Naive thymus-derived CD8-positive, alpha-beta T cell (primary cell): ENCODE measurements at regions of chr17 and their contacts with region 1.

Region 1: DNA sequence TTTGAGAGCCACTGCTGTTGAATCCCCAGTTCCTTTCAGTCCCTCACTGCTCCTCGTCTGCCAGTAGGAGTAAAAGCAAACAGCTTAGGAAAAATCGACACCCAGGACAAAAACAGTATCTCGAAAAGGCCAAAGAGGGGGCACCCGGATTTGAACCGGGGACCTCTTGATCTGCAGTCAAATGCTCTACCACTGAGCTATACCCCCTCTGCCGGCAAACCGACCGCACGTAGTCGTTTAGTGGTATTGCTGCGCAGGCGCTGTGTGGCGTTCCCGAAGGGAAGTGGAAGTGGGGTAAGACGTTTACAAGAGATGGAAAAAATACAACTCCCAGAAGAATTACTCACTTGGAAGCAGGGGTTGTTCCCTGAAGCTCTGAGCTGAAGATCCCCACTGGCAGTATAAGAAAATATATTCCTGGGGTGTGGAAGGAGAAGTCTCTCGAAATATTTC is 2.2 kb upstream of the PLXDC1 start:
- DNase-seq: peak; percentile 84 to 98 (median 92)
- ATAC-seq: peak; percentile 53 to 59
- H3K4me3 Mint-ChIP-seq: peak overlapping the region; percentile 97 to 100 (median 99)
- H3K27ac Mint-ChIP-seq: peak overlapping the region; percentile 91 to 100 (median 96)
- H3K4me1 Mint-ChIP-seq: peaks cover 40 to 52% (median 47%) of the 10 kb centered on the region in 4 donors
- H3K27me3 Mint-ChIP-seq: peaks cover 0 to 15% (median 0%) of the 10 kb centered on the region in 5 donors

Region 2: GRCh38 chr17:38853292-38854219 is 300.1 kb before region 1 on chr17 and contains the start of gene RPL23:
- POLR2A ChIA-PET with region 1: interaction called, 12 read pairs
- DNase-seq: peak; percentile 74 to 95 (median 89)
- ATAC-seq: peak; percentile 80 to 82
- H3K4me3 Mint-ChIP-seq: peak within 1 kb of the TSS; percentile 94 to 99 (median 96)
- H3K27ac Mint-ChIP-seq: peak within 1 kb of the TSS; percentile 98 to 100 (median 99)
- H3K4me1 Mint-ChIP-seq: peaks cover 29 to 47% (median 44%) of the 10 kb centered on the region in 4 donors
- H3K27me3 Mint-ChIP-seq: no peaks in the 10 kb centered on the region
- polyA plus RNA-seq, gene RPL23: 1,506 to 1,897 (median 1,688) TPM

Region 3: DNA sequence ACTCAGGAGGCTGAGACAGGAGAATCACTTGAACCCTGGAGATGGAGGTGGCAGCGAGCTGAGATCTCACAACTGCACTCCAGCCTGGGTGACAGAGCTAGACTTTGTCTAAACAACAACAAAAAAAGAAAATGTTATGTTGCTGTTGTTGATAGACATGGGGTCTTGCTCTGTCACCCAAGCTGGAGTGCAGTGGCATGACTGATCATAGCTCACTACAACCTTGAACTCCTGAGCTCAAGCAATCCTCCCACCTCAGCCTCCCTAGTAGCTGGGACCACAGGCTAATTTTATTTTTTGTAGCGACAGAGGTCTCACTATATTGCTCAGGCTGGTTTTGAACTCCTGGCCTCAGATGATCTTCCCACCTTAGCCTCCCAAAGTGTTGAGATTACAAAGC is 206.4 kb before region 1 on chr17:
- POLR2A ChIA-PET with region 1: no interaction called
- DNase-seq: peak in 1 of 10 donors; percentile 12
- ATAC-seq: peak in 1 of 2 donors; percentile 30
- H3K4me3 Mint-ChIP-seq: no peak overlapping the region
- H3K27ac Mint-ChIP-seq: no peak overlapping the region
- H3K4me1 Mint-ChIP-seq: no peaks in the 10 kb centered on the region
- H3K27me3 Mint-ChIP-seq: no peaks in the 10 kb centered on the region

Region 4: DNA sequence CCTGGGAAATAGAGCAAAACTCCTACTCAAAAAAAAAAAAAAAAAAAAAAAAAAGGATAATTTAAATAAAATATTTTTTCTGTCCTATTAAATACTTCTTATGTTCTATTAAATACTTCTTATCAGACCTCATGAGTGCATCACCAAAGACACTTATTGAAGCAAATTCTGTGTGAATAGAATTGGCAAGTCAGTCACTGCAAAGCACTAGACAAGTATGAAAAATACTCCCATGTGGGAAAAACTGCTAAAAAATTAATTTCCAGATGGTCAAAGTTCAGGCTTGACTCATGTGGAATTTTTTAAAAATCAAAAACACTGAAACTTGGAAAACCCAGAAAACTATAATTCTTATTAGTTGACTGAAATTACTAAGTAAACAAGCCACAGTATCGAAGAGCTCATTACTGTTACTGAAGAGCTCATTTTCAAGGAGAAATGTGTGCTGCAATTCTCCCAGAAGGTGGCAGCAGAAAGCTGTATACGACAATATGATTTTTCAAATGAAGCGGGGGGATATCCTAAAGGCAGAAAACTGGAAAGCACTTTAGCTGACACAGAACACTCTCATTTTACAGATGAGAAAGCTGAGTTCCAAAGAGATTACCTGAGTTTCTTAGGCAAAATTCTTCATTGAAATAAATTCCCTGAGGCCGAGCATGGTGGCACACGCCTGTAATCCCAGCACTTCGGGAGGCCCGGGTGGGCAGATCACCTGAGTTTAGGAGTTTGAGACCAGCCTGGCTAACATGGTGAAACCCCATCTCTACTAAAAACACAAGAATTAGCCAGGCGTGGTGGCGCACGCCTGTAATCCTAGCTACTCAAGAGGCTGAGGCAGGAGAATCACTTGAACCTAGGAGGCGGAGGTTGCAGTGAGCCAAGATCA is 170.5 kb before region 1 on chr17:
- POLR2A ChIA-PET with region 1: interaction called, 47 read pairs
- DNase-seq: peak in 9 of 10 donors; percentile 33 to 74 (median 53)
- ATAC-seq: peak; percentile 73 to 77
- H3K4me3 Mint-ChIP-seq: no peak overlapping the region
- H3K27ac Mint-ChIP-seq: peak overlapping the region in 1 of 10 donors; percentile 24
- H3K4me1 Mint-ChIP-seq: peaks cover 0 to 2% (median 0%) of the 10 kb centered on the region in 4 donors
- H3K27me3 Mint-ChIP-seq: no peaks in the 10 kb centered on the region

Region 5: GRCh38 chr17:39069114-39069756 is 84.4 kb before region 1 on chr17:
- POLR2A ChIA-PET with region 1: interaction called, 40 read pairs
- DNase-seq: peak in 8 of 10 donors; percentile 2 to 67 (median 42)
- ATAC-seq: peak; percentile 92 to 93
- H3K4me3 Mint-ChIP-seq: peak overlapping the region in 1 of 10 donors; percentile 44
- H3K27ac Mint-ChIP-seq: peak overlapping the region in 7 of 10 donors; percentile 13 to 89 (median 75)
- H3K4me1 Mint-ChIP-seq: peaks cover 6 to 13% (median 7%) of the 10 kb centered on the region in 4 donors
- H3K27me3 Mint-ChIP-seq: no peaks in the 10 kb centered on the region

Region 6: DNA sequence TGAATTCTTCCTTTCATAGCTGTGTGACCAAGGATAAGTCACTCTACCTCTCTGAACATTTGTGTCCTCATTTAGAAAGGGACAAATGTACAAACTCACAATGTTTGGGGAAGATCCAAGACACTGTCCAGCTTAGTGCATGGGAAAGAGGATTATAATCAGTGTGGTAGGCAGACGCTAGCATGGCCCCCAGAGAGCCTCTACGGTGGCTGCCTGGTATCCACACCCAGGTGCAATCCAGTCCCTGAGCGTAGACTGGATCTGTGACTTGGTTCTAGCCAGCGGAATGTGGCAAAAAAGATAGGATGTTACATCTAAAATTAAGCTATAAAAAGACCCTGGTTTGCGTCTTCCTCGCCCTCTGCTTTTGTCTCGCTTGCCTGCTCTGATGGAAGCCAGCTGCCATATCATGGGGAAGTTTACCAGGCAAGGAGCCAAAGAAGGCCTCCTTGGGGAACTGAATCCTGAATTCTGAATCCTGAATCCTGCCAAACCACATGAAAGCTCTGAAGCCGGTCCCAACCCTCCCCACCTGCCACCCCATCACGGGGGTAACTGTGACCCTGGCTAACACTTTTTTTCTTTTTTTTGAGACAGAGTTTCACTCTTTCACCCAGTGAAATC is 53.9 kb before region 1 on chr17:
- POLR2A ChIA-PET with region 1: interaction called, 39 read pairs
- DNase-seq: no peak
- ATAC-seq: no peak
- H3K4me3 Mint-ChIP-seq: peak overlapping the region in 3 of 10 donors; percentile 24 to 51 (median 37)
- H3K27ac Mint-ChIP-seq: peak overlapping the region in 7 of 10 donors; percentile 24 to 89 (median 70)
- H3K4me1 Mint-ChIP-seq: peaks cover 46 to 76% (median 74%) of the 10 kb centered on the region in 4 donors
- H3K27me3 Mint-ChIP-seq: no peaks in the 10 kb centered on the region

Region 7: DNA sequence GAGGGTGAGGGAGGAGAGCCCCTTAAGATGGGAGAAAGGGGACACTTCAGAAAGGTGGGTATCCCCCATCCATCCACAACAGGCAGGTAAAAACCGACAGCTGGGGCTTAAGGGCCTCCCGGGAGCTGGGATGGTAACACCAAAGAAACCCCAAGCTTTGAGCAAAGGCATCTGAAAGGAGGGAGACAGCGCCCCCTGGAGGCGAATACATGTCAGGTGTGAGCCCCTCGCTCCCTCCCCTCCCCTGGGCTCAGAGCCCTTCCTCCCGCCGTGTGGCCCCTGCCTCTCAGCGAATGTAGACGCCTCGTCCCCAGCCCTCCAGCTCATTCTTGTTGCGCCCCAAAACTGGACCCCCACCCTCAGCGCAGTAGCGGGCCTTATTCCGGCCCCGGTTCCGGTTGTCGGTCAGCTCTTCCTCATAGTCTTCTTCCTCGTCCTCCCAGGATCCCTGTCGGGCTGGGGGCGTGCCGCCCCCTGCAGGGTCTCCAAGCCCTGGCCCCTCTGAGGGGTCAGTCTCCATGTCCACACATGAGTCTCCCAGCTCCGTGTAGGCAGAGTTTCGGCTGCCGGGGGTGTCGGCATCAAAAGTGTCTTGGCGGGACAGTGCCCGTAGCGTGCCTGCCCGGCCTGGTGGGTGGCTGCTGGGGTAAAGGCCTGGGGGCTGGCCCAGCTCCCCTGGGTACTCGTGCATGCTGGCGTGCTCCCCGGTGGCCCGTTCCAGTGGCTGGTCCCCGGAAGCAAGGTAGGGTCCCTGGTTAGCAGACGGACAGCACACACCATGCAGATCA is 21.5 kb after region 1 on chr17:
- POLR2A ChIA-PET with region 1: interaction called, 12 read pairs
- DNase-seq: peak; percentile 68 to 90 (median 78)
- ATAC-seq: peak; percentile 94 to 98
- H3K4me3 Mint-ChIP-seq: no peak overlapping the region
- H3K27ac Mint-ChIP-seq: peak overlapping the region in 2 of 10 donors; percentile 51 to 77
- H3K4me1 Mint-ChIP-seq: peaks cover 16 to 33% (median 25%) of the 10 kb centered on the region in 4 donors
- H3K27me3 Mint-ChIP-seq: no peaks in the 10 kb centered on the region

Region 8: DNA sequence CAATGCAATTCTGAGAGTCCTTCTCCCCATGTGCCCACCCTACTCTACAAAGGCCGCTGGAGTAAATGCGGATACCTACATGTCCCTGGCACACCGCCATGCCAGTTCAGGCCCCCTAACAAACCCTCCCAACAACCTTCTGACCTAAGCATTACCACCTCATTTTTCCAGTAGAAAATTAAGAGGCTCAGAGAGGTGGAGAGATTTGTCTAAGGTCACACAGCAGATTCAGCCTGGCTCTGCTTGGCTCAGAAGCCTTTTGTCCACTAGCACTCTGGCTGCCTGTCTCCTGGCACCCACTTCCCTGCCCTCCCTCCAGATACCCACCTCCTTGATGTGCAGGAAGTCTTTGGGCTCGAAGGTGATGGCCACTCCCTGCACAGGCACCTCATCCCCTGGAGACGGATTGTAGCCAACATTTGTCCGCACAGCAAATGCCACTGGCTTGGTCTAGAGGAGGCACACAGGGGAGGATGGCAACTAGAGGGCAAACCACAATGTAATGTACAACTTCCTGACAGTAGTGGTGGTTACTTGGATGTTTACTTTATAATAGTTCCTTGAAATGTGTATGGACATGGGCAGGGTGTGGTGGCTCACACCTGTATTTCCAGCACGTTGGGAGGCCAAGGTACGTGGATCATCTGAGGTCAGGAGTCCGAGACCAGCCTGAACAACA is 33.7 kb after region 1 on chr17:
- POLR2A ChIA-PET with region 1: no interaction called
- DNase-seq: no peak
- ATAC-seq: no peak
- H3K4me3 Mint-ChIP-seq: no peak overlapping the region
- H3K27ac Mint-ChIP-seq: peak overlapping the region in 1 of 10 donors; percentile 19
- H3K4me1 Mint-ChIP-seq: peaks cover 0 to 1% (median under 1%) of the 10 kb centered on the region in 4 donors
- H3K27me3 Mint-ChIP-seq: no peaks in the 10 kb centered on the region